GM10248 (cell line): ENCODE measurements at regions of chr5 and their contacts with region 1.

Region 1: DNA sequence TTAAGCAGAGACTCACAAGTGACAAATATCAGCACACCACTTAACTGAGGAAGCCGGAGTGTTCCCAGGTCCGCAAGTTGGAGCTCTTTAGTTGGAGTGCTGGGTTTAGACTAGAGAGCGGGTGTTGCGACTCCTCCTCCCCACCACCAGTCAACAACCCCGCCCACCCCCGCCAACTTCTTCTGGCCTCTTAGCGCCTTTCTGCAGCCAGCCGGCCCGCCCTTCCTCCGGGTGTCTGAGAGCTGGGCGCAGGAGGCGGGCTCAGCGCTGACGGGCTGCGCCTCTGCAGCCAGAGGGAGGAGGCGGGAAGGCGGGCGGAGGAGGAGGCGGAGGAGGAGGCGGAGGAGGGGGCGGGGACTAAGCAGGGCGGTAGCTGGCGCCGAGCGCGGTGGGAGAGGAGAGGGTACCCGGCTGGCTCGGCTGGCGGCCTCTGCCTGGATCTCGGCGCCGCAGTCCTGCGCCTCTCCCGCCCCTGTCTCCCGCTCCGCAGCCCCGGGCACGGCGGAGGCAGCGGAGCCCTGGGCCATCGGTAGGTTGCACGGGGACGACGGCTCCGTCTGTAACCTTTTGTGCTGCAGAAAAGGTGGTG is at the start of gene MACIR:
- DNase-seq: peak; percentile 91
- CTCF ChIP-seq: no peak

Region 2: GRCh38 chr5:102811972-102812371 is 446.5 kb before region 1 on chr5:
- CTCF ChIA-PET with region 1: no interaction called
- POLR2A ChIA-PET with region 1: no interaction called
- DNase-seq: no peak
- CTCF ChIP-seq: no peak

Region 3: DNA sequence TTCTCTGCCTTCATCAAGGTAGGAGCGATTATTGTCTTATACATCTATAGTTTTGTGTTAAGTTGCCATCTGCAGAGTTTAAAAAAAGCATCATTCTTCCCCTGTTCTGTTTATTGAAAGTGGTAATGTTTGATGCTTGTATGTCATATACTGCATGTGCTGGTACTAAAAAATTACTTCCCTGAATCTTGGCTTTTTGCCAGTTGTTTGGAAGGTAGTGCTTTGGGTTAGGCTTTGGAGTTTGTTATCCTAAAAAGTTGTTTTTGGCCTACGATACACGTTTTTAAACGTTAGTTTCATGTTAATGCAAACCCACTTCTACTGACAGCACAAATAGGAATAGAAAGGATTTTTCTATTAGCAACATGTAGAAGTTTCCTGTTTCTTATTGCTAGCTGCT is 296.8 kb before region 1 on chr5:
- CTCF ChIA-PET with region 1: no interaction called
- POLR2A ChIA-PET with region 1: no interaction called
- DNase-seq: no peak
- CTCF ChIP-seq: no peak

Region 4: GRCh38 chr5:103232393-103232999 is 26.0 kb before region 1 on chr5:
- CTCF ChIA-PET with region 1: interaction called, 19 read pairs
- POLR2A ChIA-PET with region 1: no interaction called
- DNase-seq: peak; percentile 23
- CTCF ChIP-seq: peak; percentile 61

Region 5: DNA sequence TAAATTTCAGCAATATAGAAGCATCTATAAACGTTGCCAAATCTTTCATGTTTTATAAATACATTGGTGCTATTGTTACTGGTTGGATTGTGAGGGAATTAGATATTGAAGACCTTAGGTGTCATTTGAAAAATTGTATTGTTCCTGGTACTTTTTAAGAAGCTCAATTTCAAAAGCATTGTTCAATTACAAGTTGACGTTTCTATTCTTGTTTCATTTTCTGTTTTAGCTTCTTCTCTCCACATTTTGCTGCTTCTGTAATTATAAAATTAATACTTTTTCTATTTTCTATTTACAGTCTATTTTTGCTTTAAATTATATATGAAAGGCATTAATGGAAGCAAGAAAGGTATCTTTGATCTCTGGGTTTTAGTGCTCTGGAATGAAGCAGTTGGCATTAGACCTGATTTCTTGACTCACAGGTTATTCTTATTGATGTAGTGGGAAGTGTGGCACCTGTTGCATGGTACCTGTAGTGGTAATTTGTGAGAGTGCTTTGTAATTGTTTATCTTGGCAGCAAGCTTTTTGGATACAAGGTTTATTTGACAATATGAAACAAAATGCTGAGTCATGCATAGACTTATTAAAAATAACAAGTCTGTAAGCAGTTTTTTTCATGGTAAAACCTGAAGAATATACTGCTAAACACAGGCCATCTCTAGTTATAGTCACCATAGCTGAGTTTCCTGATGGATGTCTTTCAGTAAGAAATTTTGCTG is 13.3 kb after region 1 on chr5:
- CTCF ChIA-PET with region 1: interaction called, 31 read pairs
- POLR2A ChIA-PET with region 1: interaction called, 4 read pairs
- DNase-seq: no peak
- CTCF ChIP-seq: no peak

Region 6: GRCh38 chr5:103327893-103328292 is 69.4 kb after region 1 on chr5:
- CTCF ChIA-PET with region 1: no interaction called
- POLR2A ChIA-PET with region 1: no interaction called
- DNase-seq: no peak
- CTCF ChIP-seq: no peak